ENCODE measurements at regions of chr9 and their contacts with region 1.

Region 1: DNA sequence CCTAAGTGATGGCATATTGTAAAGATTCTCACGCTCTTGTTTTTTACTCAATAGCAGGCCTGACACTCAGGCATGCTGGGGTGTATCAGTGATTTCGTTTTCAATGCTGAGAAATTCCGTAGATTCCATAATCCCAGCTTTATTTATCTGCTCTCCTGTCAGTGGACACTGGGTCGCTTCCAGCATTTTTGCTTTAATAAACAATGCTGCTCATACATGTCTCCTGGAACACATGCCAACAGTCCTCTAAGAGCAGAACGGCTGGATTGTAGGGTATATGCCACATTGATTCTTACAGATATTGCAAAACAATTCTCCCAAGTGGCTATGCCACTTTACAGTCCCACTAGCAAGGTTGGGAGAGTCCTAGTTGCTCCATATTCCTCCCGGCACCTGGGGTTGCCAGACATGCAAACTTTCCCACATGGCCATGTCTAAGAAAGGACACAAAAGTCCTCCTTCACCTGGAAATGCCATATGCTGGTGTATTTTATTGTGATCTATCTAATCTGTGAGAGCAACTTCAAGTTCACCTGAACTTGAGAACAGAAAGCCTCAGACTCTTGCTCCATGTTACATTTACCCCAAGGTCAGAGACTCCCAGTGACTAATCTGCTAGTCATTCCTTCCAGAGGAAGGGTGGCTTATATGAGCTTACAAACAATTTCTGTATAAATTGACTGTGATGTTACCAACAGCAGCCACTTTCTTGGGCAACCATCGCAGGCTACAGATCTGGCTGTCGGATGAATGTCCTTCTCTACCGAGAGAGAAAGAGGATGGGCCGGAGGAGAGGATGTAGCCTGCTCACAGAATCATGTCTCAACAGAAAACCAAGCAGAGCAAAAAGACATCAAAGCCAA is 81.8 kb downstream of the RAPGEF1 start:
- DNase-seq: peak; percentile 84
- ATAC-seq: peak; percentile 82
- H3K4me3 ChIP-seq: peak overlapping the region in 1 of 2 experiments; percentile 37; a peak in 2 of 4 replicates
- H3K27ac ChIP-seq: peak overlapping the region; percentile 95
- H3K4me1 ChIP-seq: peaks cover 62% of the 10 kb centered on the region
- H3K27me3 ChIP-seq: no peaks in the 10 kb centered on the region
- CTCF ChIP-seq: no peak

Region 2: DNA sequence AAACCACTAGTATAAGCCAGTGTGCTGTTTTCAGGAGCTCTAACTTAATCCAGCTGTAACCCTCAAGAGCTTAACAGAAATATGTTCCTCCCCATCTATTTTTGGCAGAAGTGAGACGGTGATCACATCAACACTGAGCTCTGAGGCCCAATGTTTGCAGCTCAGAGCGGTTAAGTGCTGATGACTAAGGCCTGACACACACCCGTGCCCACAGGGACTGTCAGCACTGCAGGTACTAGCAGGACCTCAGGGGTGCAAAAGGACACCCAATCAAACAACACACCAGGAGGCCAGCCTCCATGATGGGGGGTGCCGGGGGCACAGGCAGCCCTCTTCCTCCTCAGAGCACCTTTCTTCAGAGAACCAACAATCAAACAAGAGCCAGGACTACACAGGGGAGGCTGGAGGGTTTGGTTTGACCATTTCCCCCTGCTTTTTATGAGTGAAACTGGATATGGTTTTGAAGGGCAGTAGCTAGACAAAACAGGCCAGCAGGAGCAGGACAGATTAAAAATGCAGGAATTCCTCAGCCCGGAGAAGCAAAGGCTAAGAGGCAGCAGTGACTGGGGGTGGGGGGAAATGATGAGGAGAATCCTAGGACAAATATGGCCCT is 20.5 kb after region 1 on chr9:
- CTCF ChIA-PET with region 1: no interaction called
- POLR2A ChIA-PET with region 1: interaction called, 13 read pairs
- in situ Hi-C with region 1: no loop called
- intact Hi-C with region 1: no loop called
- DNase-seq: peak; percentile 83
- ATAC-seq: peak; percentile 98
- H3K4me3 ChIP-seq: peak overlapping the region in 1 of 2 experiments; percentile 30; a peak in 2 of 4 replicates
- H3K27ac ChIP-seq: peak overlapping the region; percentile 95
- H3K4me1 ChIP-seq: peaks cover 55% of the 10 kb centered on the region
- H3K27me3 ChIP-seq: no peaks in the 10 kb centered on the region
- CTCF ChIP-seq: no peak

Region 3: GRCh38 chr9:131773911-131774379 is 115.8 kb after region 1 on chr9:
- CTCF ChIA-PET with region 1: no interaction called
- POLR2A ChIA-PET with region 1: no interaction called
- in situ Hi-C with region 1: no loop called
- intact Hi-C with region 1: no loop called
- DNase-seq: no peak
- ATAC-seq: peak; percentile 70; the same call in 1 of the 2 replicates
- H3K4me3 ChIP-seq: no peak overlapping the region
- H3K27ac ChIP-seq: no peak overlapping the region
- H3K4me1 ChIP-seq: no peaks in the 10 kb centered on the region
- H3K27me3 ChIP-seq: no peaks in the 10 kb centered on the region
- CTCF ChIP-seq: no peak

Region 4: GRCh38 chr9:131826968-131827525 is 168.9 kb after region 1 on chr9:
- CTCF ChIA-PET with region 1: no interaction called
- POLR2A ChIA-PET with region 1: no interaction called
- in situ Hi-C with region 1: no loop called
- intact Hi-C with region 1: no loop called
- DNase-seq: no peak
- ATAC-seq: no peak
- H3K4me3 ChIP-seq: no peak overlapping the region
- H3K27ac ChIP-seq: no peak overlapping the region
- H3K4me1 ChIP-seq: no peaks in the 10 kb centered on the region
- H3K27me3 ChIP-seq: no peaks in the 10 kb centered on the region
- CTCF ChIP-seq: no peak

Measured in Panc1 (cell line).